ENCODE measurements at regions of chr2 and their contacts with region 1.

Region 1: DNA sequence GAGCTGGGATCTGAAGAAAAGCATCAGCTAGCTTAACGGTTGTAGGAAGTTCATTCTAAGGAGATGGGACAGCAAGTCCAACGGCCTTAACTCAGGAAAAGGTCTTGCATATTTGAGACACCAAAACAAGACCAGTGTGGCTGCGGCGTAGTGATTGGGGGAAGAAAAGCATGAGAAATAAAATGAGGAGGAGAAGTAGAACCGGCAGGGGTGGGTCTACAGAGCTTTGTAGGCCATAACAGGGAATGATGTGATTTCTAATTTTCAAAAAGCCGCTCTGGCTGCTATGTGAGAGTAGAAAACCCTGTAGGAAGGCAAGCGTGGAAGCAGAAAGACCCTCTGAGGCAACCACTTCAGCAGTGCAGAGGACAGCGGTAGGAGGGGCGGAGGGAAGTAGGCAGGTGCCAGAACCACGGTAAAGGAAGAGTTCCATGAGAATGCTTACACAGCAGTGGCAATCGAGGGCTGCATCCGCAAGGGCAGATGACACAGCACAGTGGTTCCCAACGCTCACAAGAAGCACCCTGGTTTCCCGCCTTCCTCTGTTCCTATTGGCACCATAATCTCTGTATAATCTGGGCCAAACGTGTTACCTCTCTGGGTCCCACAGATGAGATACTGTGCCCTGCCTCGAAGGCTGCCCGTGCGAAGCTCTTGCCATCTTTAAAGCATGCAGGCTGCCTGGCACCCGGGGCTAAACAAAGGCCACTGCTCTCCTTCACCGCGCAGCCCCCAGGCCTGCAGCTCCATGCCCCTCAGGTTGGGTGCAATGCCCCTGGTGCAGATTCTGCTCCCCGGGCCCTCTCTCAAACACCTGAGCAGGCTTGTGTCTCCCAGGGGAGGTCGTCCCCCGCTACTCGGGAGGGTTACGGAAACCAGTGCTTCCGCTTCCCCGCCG is 791 bp downstream of the ANKRD39 start:
- DNase-seq: peak in 6 of 9 experiments; percentile 37 to 72 (median 44)
- ATAC-seq: no peak
- H3K4me3 ChIP-seq: peak overlapping the region; percentile 83 to 89
- H3K4me3 Mint-ChIP-seq: peak overlapping the region; percentile 87
- H3K27ac ChIP-seq: peak overlapping the region; percentile 65 to 81
- H3K27ac Mint-ChIP-seq: peak overlapping the region; percentile 85
- H3K4me1 ChIP-seq: peaks cover 32% of the 10 kb centered on the region
- H3K4me1 Mint-ChIP-seq: peaks cover 40% of the 10 kb centered on the region
- H3K27me3 ChIP-seq: no peaks in the 10 kb centered on the region
- H3K27me3 Mint-ChIP-seq: no peaks in the 10 kb centered on the region
- CTCF ChIP-seq: no peak

Region 2: DNA sequence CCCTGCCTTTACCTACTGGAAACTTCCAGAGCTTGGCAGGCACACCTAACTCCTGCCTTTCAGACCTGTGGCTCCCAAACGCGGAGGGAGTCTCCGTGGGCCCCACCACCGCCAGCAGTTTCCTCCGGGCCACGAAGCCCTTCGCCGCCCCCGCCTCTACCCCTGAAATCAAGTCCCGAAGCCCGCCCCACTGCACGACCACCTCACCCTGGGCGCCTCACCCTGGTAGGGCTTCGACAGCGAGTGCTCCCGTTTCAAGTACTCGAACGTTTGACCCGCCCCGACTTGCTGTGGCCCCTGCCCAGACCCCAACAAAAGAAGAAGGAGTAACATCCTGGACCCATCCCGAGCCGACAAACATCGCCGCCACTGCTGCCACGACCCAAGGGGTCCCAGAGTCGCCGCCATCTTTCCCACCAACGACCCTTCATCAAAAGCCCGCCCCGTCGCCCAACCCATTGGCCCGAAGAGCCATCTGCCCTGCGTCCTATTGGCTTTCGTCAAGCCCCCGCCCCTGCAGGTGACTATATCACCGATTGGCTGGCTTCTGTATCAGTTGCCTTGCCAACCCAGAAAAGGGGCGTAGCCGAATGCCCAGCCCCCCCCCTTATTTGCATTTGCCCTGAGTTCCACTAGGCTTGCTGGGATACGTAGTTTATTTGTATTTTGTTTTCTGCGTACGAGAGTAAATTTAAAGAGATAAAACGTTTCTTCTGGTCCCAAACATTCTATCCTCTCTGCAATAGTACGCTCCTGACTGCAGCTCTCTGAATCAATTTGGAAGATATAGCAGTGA is 117.2 kb before region 1 on chr2 and contains the start of gene LMAN2L:
- CTCF ChIA-PET with region 1: no interaction called
- POLR2A ChIA-PET with region 1: no interaction called
- intact Hi-C with region 1: loop called in 1 of 2 experiments (anchors 1 kb)
- DNase-seq: peak; percentile 92 to 99 (median 96)
- ATAC-seq: peak; percentile 98
- H3K4me3 ChIP-seq: peak within 1 kb of the TSS; percentile 60 to 98
- H3K4me3 Mint-ChIP-seq: peak within 1 kb of the TSS; percentile 97
- H3K27ac ChIP-seq: peak within 1 kb of the TSS; percentile 46 to 73
- H3K27ac Mint-ChIP-seq: peak within 1 kb of the TSS; percentile 91
- H3K4me1 ChIP-seq: peaks cover 13% of the 10 kb centered on the region
- H3K4me1 Mint-ChIP-seq: peaks cover 38% of the 10 kb centered on the region
- H3K27me3 ChIP-seq: no peaks in the 10 kb centered on the region
- H3K27me3 Mint-ChIP-seq: no peaks in the 10 kb centered on the region
- CTCF ChIP-seq: no peak
- total RNA-seq, gene LMAN2L: 1.1 to 1.7 TPM

Region 3: GRCh38 chr2:96816128-96816835 is 40.7 kb before region 1 on chr2 and contains the start of gene CNNM3:
- CTCF ChIA-PET with region 1: interaction called, 19 read pairs
- POLR2A ChIA-PET with region 1: interaction called, 10 read pairs
- intact Hi-C with region 1: loop called (anchors 1 kb)
- DNase-seq: peak; percentile 90 to 98 (median 96)
- ATAC-seq: peak; percentile 92
- H3K4me3 ChIP-seq: peak within 1 kb of the TSS; percentile 70 to 83
- H3K4me3 Mint-ChIP-seq: peak within 1 kb of the TSS; percentile 87
- H3K27ac ChIP-seq: peak within 1 kb of the TSS; percentile 57 to 70
- H3K27ac Mint-ChIP-seq: peak within 1 kb of the TSS; percentile 90
- H3K4me1 ChIP-seq: peaks cover 48% of the 10 kb centered on the region
- H3K4me1 Mint-ChIP-seq: peaks cover 63% of the 10 kb centered on the region
- H3K27me3 ChIP-seq: no peaks in the 10 kb centered on the region
- H3K27me3 Mint-ChIP-seq: no peaks in the 10 kb centered on the region
- CTCF ChIP-seq: peak; percentile 63
- total RNA-seq, gene CNNM3: 40.1 to 41.8 TPM

Region 4: GRCh38 chr2:96868555-96869280 is 11.7 kb after region 1 on chr2:
- CTCF ChIA-PET with region 1: interaction called, 27 read pairs
- POLR2A ChIA-PET with region 1: interaction called, 28 read pairs
- intact Hi-C with region 1: loop called (anchors 1 kb)
- DNase-seq: peak in 8 of 9 experiments; percentile 43 to 80 (median 66)
- ATAC-seq: peak; percentile 39
- H3K4me3 ChIP-seq: peak overlapping the region; percentile 77 to 83
- H3K4me3 Mint-ChIP-seq: peak overlapping the region; percentile 86
- H3K27ac ChIP-seq: peak overlapping the region; percentile 53 to 60
- H3K27ac Mint-ChIP-seq: peak overlapping the region; percentile 84
- H3K4me1 ChIP-seq: peaks cover 38% of the 10 kb centered on the region
- H3K4me1 Mint-ChIP-seq: peaks cover 45% of the 10 kb centered on the region
- H3K27me3 ChIP-seq: no peaks in the 10 kb centered on the region
- H3K27me3 Mint-ChIP-seq: no peaks in the 10 kb centered on the region
- CTCF ChIP-seq: peak; percentile 50

Region 5: DNA sequence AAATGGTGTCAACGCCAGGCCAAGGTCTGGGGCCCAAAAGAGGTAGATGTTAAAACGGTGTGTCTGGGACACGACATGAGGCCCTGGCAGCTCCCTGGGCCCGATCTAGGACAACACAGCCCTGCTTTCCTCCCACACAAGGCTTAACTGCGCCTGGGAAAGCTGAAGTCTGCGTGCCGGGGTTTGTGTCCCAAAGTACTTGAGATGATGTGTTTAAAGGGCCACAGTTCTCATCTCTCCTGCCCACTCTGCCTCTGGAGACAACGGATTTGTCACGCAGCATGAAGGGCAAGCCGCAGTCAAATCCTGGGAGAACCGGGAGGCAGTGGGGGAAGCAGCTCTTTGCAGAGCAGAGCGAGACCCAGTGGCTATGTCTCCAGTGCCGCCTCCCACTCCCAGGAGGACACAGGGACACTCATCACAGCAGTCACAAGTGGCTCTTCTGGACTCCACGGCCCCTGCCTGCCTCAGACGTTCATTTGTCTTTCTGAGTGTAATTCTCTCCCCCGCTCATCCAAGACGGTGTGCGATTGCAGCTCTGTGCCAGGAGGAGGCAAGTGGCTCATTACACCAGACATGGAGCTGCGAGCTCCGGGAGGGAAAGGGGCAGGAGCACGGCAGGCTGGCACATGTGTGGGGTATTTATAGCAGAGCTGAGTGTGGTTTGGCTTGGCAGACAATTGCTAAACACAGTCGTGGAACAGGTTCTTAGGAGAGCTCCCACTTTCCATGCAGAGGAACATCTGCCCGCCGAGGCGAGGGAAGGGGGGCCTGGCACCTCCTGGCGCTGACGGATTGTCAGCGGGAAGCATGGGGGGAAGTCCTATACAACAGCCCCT is 70.6 kb after region 1 on chr2:
- CTCF ChIA-PET with region 1: interaction called, 651 read pairs
- POLR2A ChIA-PET with region 1: interaction called, 15 read pairs
- intact Hi-C with region 1: loop called in 1 of 2 experiments (anchors 1 kb)
- DNase-seq: no peak
- ATAC-seq: no peak
- H3K4me3 ChIP-seq: no peak overlapping the region
- H3K4me3 Mint-ChIP-seq: no peak overlapping the region
- H3K27ac ChIP-seq: no peak overlapping the region
- H3K27ac Mint-ChIP-seq: no peak overlapping the region
- H3K4me1 ChIP-seq: peaks cover 23% of the 10 kb centered on the region
- H3K4me1 Mint-ChIP-seq: peaks cover 27% of the 10 kb centered on the region
- H3K27me3 ChIP-seq: no peaks in the 10 kb centered on the region
- H3K27me3 Mint-ChIP-seq: no peaks in the 10 kb centered on the region
- CTCF ChIP-seq: no peak

Region 6: GRCh38 chr2:97011977-97012565 is 155.0 kb after region 1 on chr2:
- CTCF ChIA-PET with region 1: no interaction called
- POLR2A ChIA-PET with region 1: interaction called, 3 read pairs
- intact Hi-C with region 1: loop called in 1 of 2 experiments (anchors 5 kb)
- DNase-seq: peak in 4 of 9 experiments; percentile 9 to 74 (median 42)
- ATAC-seq: peak; percentile 36
- H3K4me3 ChIP-seq: no peak overlapping the region
- H3K4me3 Mint-ChIP-seq: no peak overlapping the region
- H3K27ac ChIP-seq: no peak overlapping the region
- H3K27ac Mint-ChIP-seq: no peak overlapping the region
- H3K4me1 ChIP-seq: no peaks in the 10 kb centered on the region
- H3K4me1 Mint-ChIP-seq: no peaks in the 10 kb centered on the region
- H3K27me3 ChIP-seq: peaks cover 0 to 2% of the 10 kb centered on the region in 2 experiments
- H3K27me3 Mint-ChIP-seq: peaks cover 11% of the 10 kb centered on the region
- CTCF ChIP-seq: peak; percentile 49